ENCODE measurements at regions of chrX and their contacts with region 1.

Region 1: GRCh38 chrX:12946838-12947544 is 27.9 kb upstream of the TMSB4X start:
- DNase-seq: peak; percentile 85
- ATAC-seq: peak; percentile 9
- H3K4me3 ChIP-seq: no peak overlapping the region
- H3K27ac ChIP-seq: peak overlapping the region; percentile 97
- H3K4me1 ChIP-seq: peaks cover 41% of the 10 kb centered on the region
- H3K27me3 ChIP-seq: no peaks in the 10 kb centered on the region
- CTCF ChIP-seq: peak; percentile 97 to 100 (median 99); a peak in 5 of 6 replicates
- EP300 ChIP-seq: no peak
- POLR2A ChIP-seq: no peak
- RAD21 ChIP-seq: peak; percentile 98

Region 2: DNA sequence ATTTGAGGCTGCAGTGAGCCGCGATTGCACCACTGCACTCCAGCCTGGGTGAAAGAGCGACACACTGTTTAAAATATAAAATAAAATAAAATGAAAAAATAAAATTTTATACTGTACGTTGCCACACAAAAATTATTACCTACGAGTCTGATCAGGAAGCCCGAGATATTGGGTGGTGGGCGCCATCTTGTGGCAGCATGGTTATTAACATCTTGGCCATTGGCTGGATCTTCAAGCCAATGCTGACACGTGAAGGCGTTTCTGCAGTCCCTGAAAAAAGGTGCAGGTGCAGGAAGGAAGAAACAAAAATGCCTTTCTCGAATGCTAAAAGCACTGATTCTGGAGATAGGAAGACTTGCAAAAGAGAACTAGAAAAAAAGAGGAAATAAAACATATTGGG is 45.5 kb before region 1 on chrX:
- CTCF ChIA-PET with region 1: interaction called, 11 read pairs
- POLR2A ChIA-PET with region 1: no interaction called
- RAD21 ChIA-PET with region 1: no interaction called
- SMC1A ChIA-PET with region 1: interaction called, 7 read pairs
- in situ Hi-C with region 1: no loop called
- intact Hi-C with region 1: no loop called
- DNase-seq: no peak
- ATAC-seq: peak; percentile 93
- H3K4me3 ChIP-seq: no peak overlapping the region
- H3K27ac ChIP-seq: no peak overlapping the region
- H3K4me1 ChIP-seq: no peaks in the 10 kb centered on the region
- H3K27me3 ChIP-seq: no peaks in the 10 kb centered on the region
- CTCF ChIP-seq: peak; percentile 68 to 84 (median 75)
- EP300 ChIP-seq: no peak
- POLR2A ChIP-seq: no peak
- RAD21 ChIP-seq: peak; percentile 80

Region 3: GRCh38 chrX:13005661-13006473 is 58.9 kb after region 1 on chrX:
- CTCF ChIA-PET with region 1: interaction called, 123 read pairs
- POLR2A ChIA-PET with region 1: interaction called, 17 read pairs
- RAD21 ChIA-PET with region 1: interaction called, 66 read pairs
- SMC1A ChIA-PET with region 1: interaction called, 409 read pairs
- in situ Hi-C with region 1: loop called (anchors 5 kb)
- intact Hi-C with region 1: loop called (anchors 1 kb)
- DNase-seq: peak; percentile 89
- ATAC-seq: peak; percentile 55
- H3K4me3 ChIP-seq: peak overlapping the region; percentile 28; the same call in 1 of the 2 replicates
- H3K27ac ChIP-seq: peak overlapping the region; percentile 91
- H3K4me1 ChIP-seq: peaks cover 83% of the 10 kb centered on the region
- H3K27me3 ChIP-seq: no peaks in the 10 kb centered on the region
- CTCF ChIP-seq: no peak
- EP300 ChIP-seq: peak; percentile 96
- POLR2A ChIP-seq: no peak
- RAD21 ChIP-seq: no peak; the same call in 1 of the 2 replicates

Region 4: GRCh38 chrX:13078739-13079444 is 131.9 kb after region 1 on chrX:
- CTCF ChIA-PET with region 1: interaction called, 312 read pairs
- POLR2A ChIA-PET with region 1: interaction called, 8 read pairs
- RAD21 ChIA-PET with region 1: interaction called, 549 read pairs
- SMC1A ChIA-PET with region 1: interaction called, 632 read pairs
- in situ Hi-C with region 1: no loop called
- intact Hi-C with region 1: no loop called
- DNase-seq: no peak
- ATAC-seq: no peak
- H3K4me3 ChIP-seq: no peak overlapping the region
- H3K27ac ChIP-seq: peak overlapping the region; percentile 81
- H3K4me1 ChIP-seq: peaks cover 94% of the 10 kb centered on the region
- H3K27me3 ChIP-seq: no peaks in the 10 kb centered on the region
- CTCF ChIP-seq: no peak
- EP300 ChIP-seq: no peak
- POLR2A ChIP-seq: no peak
- RAD21 ChIP-seq: no peak

Region 5: DNA sequence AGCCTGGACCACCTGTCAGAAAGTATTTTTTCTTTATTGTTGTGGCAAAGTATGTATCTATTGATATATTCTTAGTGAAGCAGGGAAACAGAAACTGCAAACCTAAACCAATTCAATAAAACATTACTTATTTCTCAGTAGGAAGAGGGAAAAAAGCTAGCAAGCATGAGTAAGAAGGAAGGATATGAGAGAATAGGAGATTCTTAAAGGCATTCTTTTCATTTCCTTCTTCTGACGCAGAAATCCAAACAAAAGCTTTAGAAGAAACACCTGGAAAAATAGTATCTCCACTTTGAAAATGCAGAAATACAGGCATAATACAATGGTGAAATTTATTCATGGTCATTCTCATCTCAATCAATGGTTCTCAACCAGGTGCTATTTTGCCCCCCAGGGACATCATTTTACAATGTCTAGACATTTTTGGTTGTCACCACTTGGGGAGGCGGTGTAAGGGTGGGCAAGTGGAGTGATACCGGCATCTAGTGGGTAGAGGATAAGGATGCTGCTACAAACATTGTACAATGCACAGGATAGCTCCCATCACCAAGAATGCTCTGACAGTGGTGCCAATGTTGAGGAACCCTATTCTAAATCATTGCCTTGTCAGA is 394.6 kb after region 1 on chrX:
- CTCF ChIA-PET with region 1: interaction called, 19 read pairs
- POLR2A ChIA-PET with region 1: no interaction called
- RAD21 ChIA-PET with region 1: interaction called, 3 read pairs
- SMC1A ChIA-PET with region 1: interaction called, 10 read pairs
- in situ Hi-C with region 1: no loop called
- intact Hi-C with region 1: loop called (anchors 2 kb)
- DNase-seq: no peak
- ATAC-seq: peak; percentile 48
- H3K4me3 ChIP-seq: no peak overlapping the region
- H3K27ac ChIP-seq: no peak overlapping the region
- H3K4me1 ChIP-seq: peaks cover 3% of the 10 kb centered on the region; the same call in 1 of the 2 replicates
- H3K27me3 ChIP-seq: no peaks in the 10 kb centered on the region
- CTCF ChIP-seq: peak in 1 of 3 experiments; percentile 10; a peak in 1 of 6 replicates
- EP300 ChIP-seq: no peak
- POLR2A ChIP-seq: no peak
- RAD21 ChIP-seq: peak; percentile 42

Region 6: GRCh38 chrX:13487731-13488523 is 540.9 kb after region 1 on chrX:
- CTCF ChIA-PET with region 1: interaction called, 240 read pairs
- POLR2A ChIA-PET with region 1: interaction called, 15 read pairs
- RAD21 ChIA-PET with region 1: interaction called, 183 read pairs
- SMC1A ChIA-PET with region 1: interaction called, 200 read pairs
- in situ Hi-C with region 1: no loop called
- intact Hi-C with region 1: loop called (anchors 1 kb)
- DNase-seq: peak; percentile 72
- ATAC-seq: peak; percentile 86
- H3K4me3 ChIP-seq: no peak overlapping the region
- H3K27ac ChIP-seq: peak overlapping the region; percentile 95
- H3K4me1 ChIP-seq: peaks cover 16% of the 10 kb centered on the region
- H3K27me3 ChIP-seq: no peaks in the 10 kb centered on the region
- CTCF ChIP-seq: peak; percentile 56 to 80 (median 62)
- EP300 ChIP-seq: no peak
- POLR2A ChIP-seq: no peak
- RAD21 ChIP-seq: peak; percentile 98

Region 7: DNA sequence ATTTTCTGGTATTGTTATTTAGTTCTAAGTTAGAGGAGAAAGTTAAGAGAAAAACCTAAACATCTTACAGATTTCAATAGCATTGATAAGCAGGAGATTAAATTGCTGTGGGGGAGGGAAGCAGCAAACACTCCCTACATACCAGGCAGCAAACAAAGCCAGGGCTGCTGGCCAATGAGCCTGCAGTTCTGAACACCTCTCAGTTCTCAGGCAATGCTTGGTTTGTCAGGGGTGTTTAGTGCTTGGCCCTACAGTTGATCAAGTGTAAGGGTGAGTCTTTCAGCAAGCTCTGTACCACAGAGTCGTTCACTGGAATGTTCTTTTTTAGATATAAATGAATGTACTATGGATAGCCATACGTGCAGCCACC is 661.0 kb after region 1 on chrX:
- CTCF ChIA-PET with region 1: no interaction called
- POLR2A ChIA-PET with region 1: no interaction called
- RAD21 ChIA-PET with region 1: no interaction called
- SMC1A ChIA-PET with region 1: no interaction called
- in situ Hi-C with region 1: no loop called
- intact Hi-C with region 1: no loop called
- DNase-seq: no peak
- ATAC-seq: no peak
- H3K4me3 ChIP-seq: no peak overlapping the region
- H3K27ac ChIP-seq: no peak overlapping the region
- H3K4me1 ChIP-seq: no peaks in the 10 kb centered on the region
- H3K27me3 ChIP-seq: no peaks in the 10 kb centered on the region; a peak in 1 of 4 replicates
- CTCF ChIP-seq: no peak
- EP300 ChIP-seq: no peak
- POLR2A ChIP-seq: no peak
- RAD21 ChIP-seq: no peak

Region 8: GRCh38 chrX:14029425-14030173 is 1082.6 kb after region 1 on chrX and contains the start of gene GEMIN8:
- CTCF ChIA-PET with region 1: interaction called, 3 read pairs
- POLR2A ChIA-PET with region 1: no interaction called
- RAD21 ChIA-PET with region 1: no interaction called
- SMC1A ChIA-PET with region 1: no interaction called
- in situ Hi-C with region 1: loop called (anchors 10 kb)
- intact Hi-C with region 1: no loop called
- DNase-seq: peak; percentile 46
- ATAC-seq: peak; percentile 84
- H3K4me3 ChIP-seq: peak within 1 kb of the TSS; percentile 81
- H3K27ac ChIP-seq: peak within 1 kb of the TSS; percentile 77
- H3K4me1 ChIP-seq: peaks cover 6% of the 10 kb centered on the region
- H3K27me3 ChIP-seq: no peaks in the 10 kb centered on the region
- CTCF ChIP-seq: no peak
- EP300 ChIP-seq: 0 out of 4 replicates have a peak, but pooled peaks of 1 of the 2 experiments have one; percentile 4
- POLR2A ChIP-seq: peak; percentile 91
- RAD21 ChIP-seq: no peak
- polyA plus RNA-seq, gene GEMIN8: 18.4 to 29.5 TPM

Measured in GM12878 (cell line).